Head of caudate nucleus (tissue), 42 donors: ENCODE measurements at regions of chr4 and their contacts with region 1.

Region 1: DNA sequence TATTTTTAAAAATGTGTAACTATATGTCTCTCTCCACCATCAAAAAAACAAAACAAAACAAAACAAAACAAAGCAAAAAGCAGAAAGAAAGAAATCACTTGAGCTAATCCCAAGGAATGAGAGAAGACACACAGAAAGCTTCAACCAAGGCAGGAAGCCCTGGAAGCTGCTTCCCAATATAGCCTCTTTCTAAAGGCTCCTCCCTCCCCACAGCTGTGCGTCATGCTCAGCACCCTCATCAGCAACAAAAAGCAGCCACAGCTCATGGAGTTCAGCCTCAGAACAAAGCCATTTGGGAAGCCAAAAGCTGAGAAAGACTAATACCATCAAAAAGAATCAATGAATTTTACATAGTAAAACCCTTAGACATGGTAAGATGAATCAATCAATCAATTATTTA is 501.6 kb upstream of the SMIM31 start:
- DNase-seq: peak; percentile 25 to 88 (median 68)

Region 2: DNA sequence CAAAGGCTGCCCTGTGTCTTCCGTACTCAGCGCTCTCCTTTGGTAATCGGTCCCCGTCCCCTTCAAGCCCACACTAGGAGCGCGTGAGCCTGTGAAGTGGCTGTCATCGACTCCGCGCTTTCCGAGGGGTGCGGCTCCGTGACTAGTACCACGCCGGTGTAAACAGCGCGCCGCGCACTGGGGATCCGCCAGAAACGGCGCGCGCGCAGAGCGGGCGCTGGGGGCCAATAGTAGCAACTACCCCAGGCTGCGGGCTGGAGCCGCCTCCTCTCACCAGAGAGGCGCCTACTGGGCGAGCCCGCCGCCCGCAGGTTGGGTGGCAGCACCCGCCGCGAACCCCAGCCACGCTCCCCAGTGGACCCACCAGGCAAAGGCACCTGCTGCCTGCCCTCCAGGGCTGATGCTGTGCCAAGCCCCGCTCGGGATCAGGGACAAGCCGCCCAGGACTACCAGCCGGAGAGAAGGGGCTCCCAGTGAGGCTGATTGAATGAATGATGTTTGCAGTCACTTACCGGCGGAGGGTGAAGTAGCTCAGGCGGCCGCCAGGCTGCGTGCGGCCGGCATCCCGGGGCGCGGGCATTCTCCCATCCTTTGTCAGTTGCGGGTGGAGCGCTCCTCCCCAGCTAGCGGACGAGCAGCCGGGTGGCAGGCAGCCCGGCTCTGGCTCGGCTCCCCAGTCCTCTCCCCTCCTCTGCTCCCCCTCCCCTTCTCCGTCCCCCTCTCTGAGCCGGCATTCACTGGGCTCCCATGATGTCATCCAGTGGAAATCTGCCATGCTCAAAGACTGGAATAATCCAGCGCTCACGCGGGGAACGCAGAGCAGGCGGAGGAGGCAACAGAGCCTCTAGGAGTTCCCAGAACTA is 131.3 kb after region 1 on chr4:
- intact Hi-C with region 1: loop called (anchors 5 kb)
- DNase-seq: peak; percentile 83 to 98 (median 94)